Mammary epithelial cell (primary cell): ENCODE measurements at regions of chr2 and their contacts with region 1.

Region 1: GRCh38 chr2:62604336-62604735 is 98.3 kb upstream of the TMEM17 start:
- DNase-seq: peak; percentile 90
- H3K4me3 ChIP-seq: no peak overlapping the region
- H3K27ac ChIP-seq: peak overlapping the region; percentile 44
- H3K4me1 ChIP-seq: peaks cover 16% of the 10 kb centered on the region
- H3K27me3 ChIP-seq: no peaks in the 10 kb centered on the region
- CTCF ChIP-seq: no peak

Region 2: DNA sequence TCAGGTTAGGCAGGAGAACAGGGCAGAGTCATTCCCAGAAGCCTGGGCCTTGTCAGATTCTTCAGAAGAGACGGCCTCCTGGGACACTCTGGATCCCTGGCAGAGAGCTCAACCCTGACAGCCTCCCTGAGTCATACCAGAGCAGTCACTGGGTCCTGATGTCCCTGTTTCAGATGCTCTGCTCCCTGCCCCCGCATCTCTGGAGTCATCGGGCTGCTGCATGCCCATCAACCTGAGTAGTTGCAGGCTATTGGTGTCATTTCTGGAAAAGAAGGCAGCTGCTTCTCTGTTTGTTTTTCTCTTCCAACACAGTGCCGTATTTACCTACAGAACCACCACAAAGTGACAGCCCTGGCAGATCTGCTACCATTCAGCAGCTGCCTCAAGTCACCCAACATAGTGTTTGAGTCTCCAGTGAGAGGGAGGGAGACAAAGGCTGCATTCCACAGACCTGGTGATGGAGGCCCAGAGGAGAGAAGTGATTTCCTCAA is 263.3 kb before region 1 on chr2:
- CTCF ChIA-PET with region 1: no interaction called
- dilution Hi-C with region 1: no loop called
- in situ Hi-C with region 1: no loop called
- intact Hi-C with region 1: no loop called
- DNase-seq: no peak
- H3K4me3 ChIP-seq: no peak overlapping the region
- H3K27ac ChIP-seq: no peak overlapping the region
- H3K4me1 ChIP-seq: no peaks in the 10 kb centered on the region
- H3K27me3 ChIP-seq: no peaks in the 10 kb centered on the region
- CTCF ChIP-seq: no peak

Region 3: GRCh38 chr2:62660582-62661262 is 56.4 kb after region 1 on chr2:
- CTCF ChIA-PET with region 1: no interaction called
- dilution Hi-C with region 1: no loop called
- in situ Hi-C with region 1: no loop called
- intact Hi-C with region 1: loop called (anchors 2 kb)
- DNase-seq: peak; percentile 86
- H3K4me3 ChIP-seq: peak overlapping the region in 1 of 3 experiments; percentile 3
- H3K27ac ChIP-seq: peak overlapping the region; percentile 83
- H3K4me1 ChIP-seq: peaks cover 49% of the 10 kb centered on the region
- H3K27me3 ChIP-seq: no peaks in the 10 kb centered on the region
- CTCF ChIP-seq: no peak